SK-N-SH (cell line): ENCODE measurements at regions of chr10 and their contacts with region 1.

Region 1: DNA sequence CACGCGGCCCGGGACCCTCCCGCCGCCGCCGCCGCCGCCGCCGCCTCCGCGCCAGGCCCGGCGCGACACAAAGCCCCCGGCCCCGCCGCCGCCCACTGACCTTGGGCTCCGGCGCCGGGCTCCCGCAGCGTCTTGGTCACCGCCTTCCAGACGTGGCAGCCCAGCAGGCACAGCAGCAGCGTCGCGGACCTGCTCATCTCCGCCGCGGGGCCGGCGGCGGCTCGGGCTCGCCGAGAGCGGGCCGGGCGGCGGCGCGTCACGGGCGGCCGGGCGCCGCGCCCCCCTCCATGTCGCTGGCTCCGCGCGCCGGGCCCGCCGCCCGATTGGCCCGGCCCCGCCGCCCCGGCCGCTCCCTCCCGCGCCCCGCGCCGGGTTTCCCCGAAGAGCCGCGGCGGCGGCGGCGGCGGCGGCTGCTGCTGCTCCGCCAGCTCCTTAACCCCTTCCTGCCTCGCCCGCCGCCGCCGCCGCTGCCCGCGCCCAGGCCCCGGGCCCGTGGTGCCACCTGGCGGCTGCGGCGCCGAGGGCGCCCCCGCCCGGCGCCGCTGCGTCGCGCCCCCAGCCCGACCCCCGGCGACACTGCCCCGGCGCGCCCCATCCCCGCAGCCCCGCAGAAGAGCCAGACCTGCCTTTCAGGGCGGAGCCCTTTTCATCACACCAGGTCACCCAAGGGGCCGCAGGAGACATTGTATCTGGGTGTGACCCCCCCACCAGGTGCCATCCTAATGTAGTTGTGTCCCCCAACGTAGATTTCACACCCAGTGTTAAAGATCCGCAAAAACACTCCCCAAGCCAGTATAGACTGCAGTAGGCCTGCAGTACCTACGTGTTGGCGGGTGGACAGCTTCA is at the start of gene FAM171A1:
- DNase-seq: peak; percentile 93
- H3K4me3 ChIP-seq: peak within 1 kb of the TSS; percentile 75 to 79
- H3K27ac ChIP-seq: peak within 1 kb of the TSS; percentile 13 to 77
- H3K4me1 ChIP-seq: peaks cover 0 to 8% of the 10 kb centered on the region in 2 experiments; a peak in 3 of 4 replicates
- H3K27me3 ChIP-seq: no peaks in the 10 kb centered on the region
- CTCF ChIP-seq: peak; percentile 40
- EP300 ChIP-seq: no peak
- RAD21 ChIP-seq: peak; percentile 47; the same call in 1 of the 2 replicates
- polyA plus RNA-seq, gene FAM171A1: 17.2 and 26.3 TPM in 2 replicates

Region 2: DNA sequence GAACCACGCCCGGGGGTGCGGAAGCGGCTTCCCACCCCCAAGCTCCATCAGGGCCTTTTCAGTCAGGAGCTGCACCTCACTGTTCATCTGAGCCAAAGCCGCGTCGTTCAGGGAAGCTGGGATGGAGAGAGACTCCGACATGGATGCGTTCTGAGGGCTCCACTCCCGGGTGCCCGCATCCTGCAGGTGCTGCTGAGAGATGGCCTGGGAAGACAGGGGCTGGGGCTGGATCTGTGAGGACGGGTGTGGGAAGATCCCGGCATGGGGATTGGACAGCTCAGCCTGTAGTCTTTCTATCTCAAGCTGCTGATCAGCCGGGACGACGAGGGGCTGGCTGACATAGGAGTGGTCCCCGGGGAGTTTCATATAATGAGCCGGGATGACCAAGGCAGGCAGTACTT is 157.6 kb before region 1 on chr10:
- CTCF ChIA-PET with region 1: interaction called, 10 read pairs
- POLR2A ChIA-PET with region 1: no interaction called
- DNase-seq: no peak
- H3K4me3 ChIP-seq: no peak overlapping the region
- H3K27ac ChIP-seq: no peak overlapping the region
- H3K4me1 ChIP-seq: peaks cover 0 to 5% of the 10 kb centered on the region in 2 experiments; a peak in 1 of 4 replicates
- H3K27me3 ChIP-seq: no peaks in the 10 kb centered on the region
- CTCF ChIP-seq: no peak
- EP300 ChIP-seq: no peak
- RAD21 ChIP-seq: no peak

Region 3: DNA sequence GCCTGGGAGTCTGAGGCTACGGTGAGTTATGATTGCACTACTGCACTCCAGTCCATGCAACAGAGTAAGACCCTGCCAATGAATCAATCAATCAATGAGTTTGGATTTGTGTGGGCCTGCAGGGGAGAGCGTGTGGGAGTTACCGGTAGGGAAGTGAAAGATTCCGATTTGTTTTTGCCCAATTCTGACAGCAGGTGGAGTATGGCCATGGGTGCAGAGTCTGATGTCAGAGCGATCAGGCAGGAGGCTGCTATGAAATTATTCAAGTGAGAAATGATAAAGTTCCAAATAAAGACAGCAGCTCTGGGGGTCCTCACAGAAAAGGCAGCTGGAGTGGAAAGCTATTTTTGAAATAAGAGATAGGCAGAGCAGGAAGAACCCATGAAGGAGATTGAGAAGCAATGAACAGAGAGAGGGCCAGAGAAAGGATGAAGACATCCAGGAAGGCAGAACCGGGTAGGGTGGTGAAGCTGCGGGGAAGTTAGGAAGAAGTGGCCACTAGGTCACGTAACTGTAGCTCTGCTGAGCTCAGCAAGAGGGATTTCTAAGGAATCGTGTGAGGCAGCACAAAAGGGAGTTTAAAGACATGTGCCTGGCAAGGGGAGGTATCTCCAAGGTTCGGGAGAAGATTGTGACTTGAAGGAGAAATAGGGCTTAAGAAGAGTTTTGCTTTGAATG is 108.9 kb before region 1 on chr10:
- CTCF ChIA-PET with region 1: interaction called, 45 read pairs
- POLR2A ChIA-PET with region 1: no interaction called
- DNase-seq: peak; percentile 43
- H3K4me3 ChIP-seq: no peak overlapping the region
- H3K27ac ChIP-seq: no peak overlapping the region
- H3K4me1 ChIP-seq: no peaks in the 10 kb centered on the region; a peak in 1 of 4 replicates
- H3K27me3 ChIP-seq: no peaks in the 10 kb centered on the region
- CTCF ChIP-seq: 0 out of 2 replicates have a peak, but pooled peaks have one; percentile 26
- EP300 ChIP-seq: no peak
- RAD21 ChIP-seq: peak; percentile 69

Region 4: GRCh38 chr10:15348579-15348978 is 22.5 kb before region 1 on chr10:
- CTCF ChIA-PET with region 1: no interaction called
- POLR2A ChIA-PET with region 1: no interaction called
- DNase-seq: no peak
- H3K4me3 ChIP-seq: no peak overlapping the region
- H3K27ac ChIP-seq: no peak overlapping the region
- H3K4me1 ChIP-seq: peaks cover 0 to 31% of the 10 kb centered on the region in 2 experiments; a peak in 2 of 4 replicates
- H3K27me3 ChIP-seq: no peaks in the 10 kb centered on the region
- CTCF ChIP-seq: no peak
- EP300 ChIP-seq: no peak
- RAD21 ChIP-seq: no peak